ENCODE measurements at regions of chr12 and their contacts with region 1.

Region 1: GRCh38 chr12:84912198-84913128 is at the start of gene SLC6A15:
- DNase-seq: peak; percentile 36
- H3K4me3 Mint-ChIP-seq: peak within 1 kb of the TSS; percentile 67
- H3K27ac Mint-ChIP-seq: no peak within 1 kb of the TSS
- H3K4me1 Mint-ChIP-seq: peaks cover 13% of the 10 kb centered on the region
- H3K27me3 Mint-ChIP-seq: peaks cover 35% of the 10 kb centered on the region
- total RNA-seq, gene SLC6A15: 0.12 to 0.17 TPM

Region 2: DNA sequence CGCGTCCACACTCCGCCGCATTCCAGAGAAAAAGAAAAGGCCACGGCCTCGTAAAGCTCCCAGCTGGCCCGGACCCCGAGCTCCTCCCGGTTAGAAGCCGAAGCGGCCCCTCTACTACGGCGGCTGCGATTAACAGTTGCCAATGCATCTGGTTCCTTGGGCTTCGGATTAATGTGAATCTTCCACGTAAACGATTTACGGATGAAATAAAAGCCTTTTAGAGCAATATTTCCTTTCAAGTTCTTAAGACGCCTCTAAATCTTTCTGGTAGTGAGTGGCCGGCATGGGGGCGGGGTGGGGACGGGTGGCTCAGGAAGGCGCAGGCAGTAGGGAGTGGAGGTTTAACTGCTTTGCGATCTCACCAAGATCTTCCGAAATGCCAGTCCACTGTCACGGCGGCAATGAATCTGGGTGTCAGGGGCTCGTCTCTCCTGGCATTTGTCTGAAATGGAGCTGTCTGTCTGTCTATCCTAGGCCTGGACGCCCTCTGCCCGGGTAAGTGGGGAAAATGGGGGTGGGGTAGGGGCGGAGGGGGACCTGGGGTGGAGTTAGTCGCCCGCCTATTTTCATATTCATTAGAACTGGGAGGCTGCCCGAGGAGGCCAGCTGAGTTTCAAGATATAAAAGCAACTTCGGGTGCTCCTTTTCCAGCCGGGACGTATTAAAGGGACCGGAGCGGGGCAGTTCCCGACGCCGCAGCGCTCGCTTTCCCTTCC is 367.1 kb after region 1 on chr12:
- CTCF ChIA-PET with region 1: no interaction called
- POLR2A ChIA-PET with region 1: no interaction called
- intact Hi-C with region 1: loop called (anchors 10 kb)
- DNase-seq: no peak
- H3K4me3 Mint-ChIP-seq: no peak overlapping the region
- H3K27ac Mint-ChIP-seq: no peak overlapping the region
- H3K4me1 Mint-ChIP-seq: peaks cover 7% of the 10 kb centered on the region
- H3K27me3 Mint-ChIP-seq: peaks cover 51% of the 10 kb centered on the region

Measured in activated CD4-positive, alpha-beta memory T cell treated with anti-CD3 and anti-CD28 coated beads for 36 hours (primary cell).